Endothelial cell of umbilical vein (primary cell): ENCODE measurements at regions of chr2 and their contacts with region 1.

Region 1: DNA sequence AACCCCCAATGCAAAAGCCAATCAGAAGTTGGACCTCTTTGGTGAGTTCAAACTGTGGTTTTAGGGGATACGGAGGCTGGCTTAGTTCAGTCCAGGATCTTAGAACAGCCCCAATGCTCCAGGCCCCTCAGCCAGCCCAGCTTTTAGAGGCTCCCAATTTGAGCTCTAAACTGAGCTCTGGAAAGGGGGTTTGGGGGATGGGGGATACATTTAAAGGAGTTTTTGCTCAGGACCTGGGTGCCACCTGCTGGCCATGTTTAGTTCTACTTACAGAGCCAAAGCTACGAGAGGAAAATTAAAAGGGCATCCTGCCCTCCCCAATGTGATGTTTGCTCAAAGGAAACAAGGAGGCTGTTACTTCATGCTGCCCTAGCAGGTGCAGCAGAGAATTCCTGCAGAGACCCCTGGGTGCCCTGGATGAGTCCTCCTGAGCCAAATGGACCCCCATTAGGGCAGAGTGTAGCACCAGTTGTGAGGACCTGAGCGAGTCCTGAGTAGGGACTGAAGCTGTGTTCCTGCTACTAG is 15.9 kb upstream of the TMEM214 start:
- DNase-seq: peak; percentile 63
- H3K4me3 ChIP-seq: no peak overlapping the region
- H3K27ac ChIP-seq: no peak overlapping the region
- H3K4me1 ChIP-seq: peaks cover 13% of the 10 kb centered on the region
- H3K27me3 ChIP-seq: no peaks in the 10 kb centered on the region
- CTCF ChIP-seq: peak; percentile 68 to 70
- POLR2A ChIP-seq: no peak

Region 2: GRCh38 chr2:26504002-26504401 is 512.9 kb before region 1 on chr2:
- CTCF ChIA-PET with region 1: no interaction called
- POLR2A ChIA-PET with region 1: no interaction called
- dilution Hi-C with region 1: no loop called
- intact Hi-C with region 1: no loop called
- DNase-seq: no peak
- H3K4me3 ChIP-seq: no peak overlapping the region
- H3K27ac ChIP-seq: no peak overlapping the region
- H3K4me1 ChIP-seq: no peaks in the 10 kb centered on the region
- H3K27me3 ChIP-seq: peaks cover 0 to 2% of the 10 kb centered on the region in 2 experiments
- CTCF ChIP-seq: no peak
- POLR2A ChIP-seq: no peak

Region 3: DNA sequence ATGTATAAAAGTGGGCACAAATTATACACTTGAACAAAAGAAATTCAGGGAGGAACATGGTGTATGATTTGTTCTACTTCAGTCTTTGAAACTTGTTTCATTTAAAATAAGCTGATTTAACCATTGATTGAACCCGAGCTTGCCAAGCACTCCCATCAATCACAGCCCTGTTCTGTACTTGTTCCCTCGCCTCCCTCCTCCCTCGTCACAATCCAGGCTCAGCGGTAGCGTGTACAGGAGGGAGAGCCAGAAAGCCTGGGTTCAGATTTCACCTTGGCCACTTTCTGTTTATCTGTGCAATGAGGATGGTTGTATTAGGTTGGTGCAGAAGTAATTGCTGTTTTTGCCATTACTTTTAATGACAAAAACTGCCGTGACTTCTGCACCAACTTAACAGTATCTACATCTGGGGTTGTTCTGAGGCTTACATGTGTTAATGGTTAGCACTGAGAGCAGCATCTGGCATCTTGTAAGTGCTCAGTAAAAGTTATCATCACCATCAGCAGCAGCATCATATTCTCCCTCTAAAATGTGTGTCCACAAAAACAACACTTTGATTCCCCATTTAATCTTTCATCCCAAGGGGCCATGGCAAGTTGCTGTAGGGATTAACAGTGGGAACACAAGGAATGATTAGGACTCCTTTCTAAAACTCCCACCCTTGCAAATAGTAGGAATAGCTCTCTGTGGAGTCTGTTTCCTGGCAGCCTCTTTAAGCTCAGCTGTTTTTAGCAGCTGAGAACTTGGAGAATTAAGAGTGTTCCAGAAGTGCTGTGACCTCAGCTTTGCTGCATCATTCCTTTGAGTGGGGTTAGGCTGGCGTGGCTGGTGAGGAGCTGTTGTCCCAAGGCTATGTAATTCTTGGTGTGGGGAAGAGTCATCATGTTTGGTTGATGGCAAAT is 164.2 kb before region 1 on chr2:
- CTCF ChIA-PET with region 1: interaction called, 11 read pairs
- POLR2A ChIA-PET with region 1: no interaction called
- dilution Hi-C with region 1: no loop called
- intact Hi-C with region 1: no loop called
- DNase-seq: no peak
- H3K4me3 ChIP-seq: no peak overlapping the region
- H3K27ac ChIP-seq: no peak overlapping the region
- H3K4me1 ChIP-seq: peaks cover 4% of the 10 kb centered on the region
- H3K27me3 ChIP-seq: peaks cover 45 to 59% of the 10 kb centered on the region in 2 experiments
- CTCF ChIP-seq: no peak
- POLR2A ChIP-seq: no peak

Region 4: DNA sequence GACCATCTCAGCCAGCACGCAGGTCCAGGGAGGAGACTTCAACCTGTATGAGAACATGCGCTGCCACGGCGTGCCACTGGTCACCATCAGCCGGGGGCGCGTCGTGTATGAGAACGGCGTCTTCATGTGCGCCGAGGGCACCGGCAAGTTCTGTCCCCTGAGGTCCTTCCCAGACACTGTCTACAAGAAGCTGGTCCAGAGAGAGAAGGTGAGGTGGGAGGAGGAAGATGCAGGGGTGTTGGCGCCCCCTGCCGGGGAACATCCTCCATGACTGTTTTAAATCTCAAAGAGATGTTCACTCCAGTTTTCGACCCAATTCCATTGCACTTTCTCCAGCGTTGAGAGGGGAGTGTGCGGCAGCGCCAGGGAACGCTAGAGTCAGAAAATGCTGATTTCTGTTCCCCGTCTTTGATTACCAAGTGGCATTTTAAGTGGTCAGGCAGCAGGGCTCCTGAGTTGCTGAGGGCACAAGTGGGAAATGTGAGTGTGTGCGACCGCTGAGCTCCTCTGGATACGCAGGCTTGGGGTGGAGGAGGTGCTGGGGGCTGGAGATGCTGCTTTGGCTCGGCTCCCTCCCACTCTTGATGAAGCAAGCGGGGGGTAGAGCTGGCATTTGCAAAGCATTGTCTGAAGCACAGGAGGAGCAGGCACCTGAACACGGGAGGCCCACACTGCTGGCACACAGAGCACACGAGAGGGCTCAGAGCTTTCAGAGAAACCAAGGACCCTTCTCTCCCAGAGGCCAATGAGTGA is 74.1 kb before region 1 on chr2:
- CTCF ChIA-PET with region 1: interaction called, 12 read pairs
- POLR2A ChIA-PET with region 1: no interaction called
- dilution Hi-C with region 1: no loop called
- intact Hi-C with region 1: no loop called
- DNase-seq: peak; percentile 46
- H3K4me3 ChIP-seq: no peak overlapping the region
- H3K27ac ChIP-seq: no peak overlapping the region
- H3K4me1 ChIP-seq: no peaks in the 10 kb centered on the region
- H3K27me3 ChIP-seq: peaks cover 3 to 4% of the 10 kb centered on the region in 2 experiments
- CTCF ChIP-seq: peak; percentile 78
- POLR2A ChIP-seq: no peak

Region 5: DNA sequence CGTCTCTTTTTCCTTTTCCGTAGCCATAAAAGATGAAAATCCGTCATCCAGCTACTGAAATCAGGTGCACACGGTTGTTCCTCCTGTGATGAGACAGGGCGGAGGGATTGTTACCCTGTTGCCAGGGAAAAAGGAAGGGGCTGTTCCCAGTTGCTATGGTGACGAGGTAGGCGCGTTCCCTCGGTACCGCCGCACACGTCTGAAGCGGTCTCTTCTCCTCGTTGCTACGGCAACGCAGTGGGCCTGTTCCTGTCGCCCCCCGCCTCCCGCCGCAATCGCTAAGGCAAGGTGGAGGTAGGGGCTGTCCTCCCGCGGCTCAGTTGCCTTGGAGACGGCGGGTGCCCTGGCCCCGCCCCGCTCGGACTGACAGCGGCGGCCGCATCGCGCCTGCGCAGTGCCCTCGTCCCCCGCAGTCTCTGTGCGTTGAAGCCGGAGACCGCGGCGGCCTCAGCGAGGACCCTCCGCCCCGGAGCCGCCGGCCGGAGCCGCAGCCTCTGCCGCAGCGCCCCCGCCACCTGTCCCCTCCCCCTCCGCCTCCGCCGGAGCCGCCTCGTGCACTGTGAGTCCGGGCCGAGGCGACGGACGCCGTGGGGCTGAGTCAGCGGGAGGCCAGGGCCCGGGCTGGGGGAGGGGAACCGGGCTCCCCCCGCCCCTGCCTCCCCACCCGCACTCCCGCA is 46.5 kb before region 1 on chr2 and contains the start of gene MAPRE3:
- CTCF ChIA-PET with region 1: interaction called, 44 read pairs
- POLR2A ChIA-PET with region 1: no interaction called
- dilution Hi-C with region 1: no loop called
- intact Hi-C with region 1: no loop called
- DNase-seq: peak; percentile 85
- H3K4me3 ChIP-seq: peak within 1 kb of the TSS in 2 of 3 experiments; percentile 29 to 75
- H3K27ac ChIP-seq: no peak within 1 kb of the TSS
- H3K4me1 ChIP-seq: peaks cover 2% of the 10 kb centered on the region
- H3K27me3 ChIP-seq: peaks cover 20 to 23% of the 10 kb centered on the region in 2 experiments
- CTCF ChIP-seq: no peak
- POLR2A ChIP-seq: no peak
- total RNA-seq, gene MAPRE3: 5.0 and 6.1 TPM in 2 replicates

Region 6: DNA sequence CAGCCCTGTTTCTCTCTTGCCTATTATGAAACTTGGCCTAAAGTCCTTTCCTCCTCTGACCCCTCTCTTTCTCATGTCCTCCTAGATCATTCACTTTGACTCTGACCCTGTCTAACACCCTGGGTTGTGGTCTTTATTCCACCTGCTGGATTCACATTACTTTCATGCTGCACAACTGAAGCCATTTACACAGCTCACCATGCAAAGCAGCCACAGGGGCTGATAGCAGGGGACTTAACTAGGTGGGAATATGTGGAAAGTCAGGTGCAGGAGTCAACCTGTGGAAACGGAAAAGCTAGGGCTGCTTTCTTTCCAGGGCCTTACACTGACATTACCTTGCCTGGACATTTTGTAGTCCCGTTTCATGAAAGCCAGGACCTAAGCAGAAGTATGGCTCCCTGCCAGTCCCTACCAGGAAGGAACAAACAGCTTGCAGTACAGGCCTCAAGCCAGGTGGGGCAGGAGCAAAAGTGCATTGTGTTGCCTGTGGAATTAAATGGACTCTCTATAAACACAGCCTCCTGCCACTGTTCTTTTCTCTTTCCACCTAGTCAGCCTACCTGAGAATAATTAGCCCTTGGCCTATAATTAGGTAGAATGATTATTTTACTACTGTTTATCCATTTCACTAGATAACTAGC is 34.6 kb before region 1 on chr2:
- CTCF ChIA-PET with region 1: interaction called, 25 read pairs
- POLR2A ChIA-PET with region 1: no interaction called
- dilution Hi-C with region 1: no loop called
- intact Hi-C with region 1: no loop called
- DNase-seq: peak; percentile 72
- H3K4me3 ChIP-seq: no peak overlapping the region
- H3K27ac ChIP-seq: no peak overlapping the region
- H3K4me1 ChIP-seq: no peaks in the 10 kb centered on the region
- H3K27me3 ChIP-seq: peaks cover 6 to 7% of the 10 kb centered on the region in 2 experiments
- CTCF ChIP-seq: peak; percentile 21 to 50
- POLR2A ChIP-seq: no peak

Region 7: GRCh38 chr2:27071277-27071989 is 54.6 kb after region 1 on chr2 and contains the start of gene OST4:
- CTCF ChIA-PET with region 1: no interaction called
- POLR2A ChIA-PET with region 1: no interaction called
- dilution Hi-C with region 1: no loop called
- intact Hi-C with region 1: no loop called
- DNase-seq: peak; percentile 92
- H3K4me3 ChIP-seq: peak within 1 kb of the TSS; percentile 41 to 85 (median 68)
- H3K27ac ChIP-seq: peak within 1 kb of the TSS; percentile 76
- H3K4me1 ChIP-seq: peaks cover 17% of the 10 kb centered on the region
- H3K27me3 ChIP-seq: no peaks in the 10 kb centered on the region
- CTCF ChIP-seq: no peak
- POLR2A ChIP-seq: peak; percentile 93
- total RNA-seq, gene OST4: 415 TPM in 2 replicates